Activated CD4-positive, alpha-beta T cell treated with anti-CD3 and anti-CD28 coated beads for 36 hours (primary cell): ENCODE measurements at regions of chr20 and their contacts with region 1.

Region 1: DNA sequence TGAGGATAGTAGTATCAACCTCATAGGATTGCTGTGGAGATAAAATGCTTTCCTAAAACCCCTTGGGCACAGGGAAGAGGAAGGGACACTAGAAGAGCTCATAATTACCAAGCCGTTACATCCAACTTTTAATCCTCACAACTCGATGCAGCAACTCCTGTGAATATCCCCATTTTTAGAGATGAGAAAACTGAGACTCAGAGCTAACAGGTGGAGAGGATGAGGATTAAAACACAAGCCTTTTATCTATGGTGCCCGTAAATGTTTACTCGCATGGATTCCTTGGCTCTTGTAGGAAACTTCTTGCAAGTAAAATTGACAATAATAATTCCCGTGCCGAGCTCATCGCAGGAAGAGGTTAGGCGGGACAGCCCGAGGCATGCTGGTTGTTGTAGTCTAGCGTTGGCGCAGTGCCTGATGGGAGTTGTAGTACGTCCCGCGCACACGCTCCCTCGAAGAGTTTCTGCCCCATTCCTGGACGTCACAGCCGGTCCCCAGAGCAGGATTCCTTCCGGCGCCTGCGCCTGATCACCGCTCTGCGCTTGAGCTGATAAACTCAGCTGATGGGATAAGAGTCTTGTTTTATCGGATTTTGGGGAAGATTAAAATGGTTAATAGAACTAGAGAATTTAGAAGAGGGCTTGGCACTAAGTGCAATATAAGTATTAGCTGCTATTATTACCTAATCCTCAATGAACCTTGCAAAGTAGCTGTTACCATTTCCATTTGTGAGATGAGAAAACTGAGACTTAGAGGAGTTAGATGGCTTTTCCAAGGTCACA is 2.8 kb upstream of the UBE2V1 start:
- DNase-seq: peak; percentile 96
- ATAC-seq: peak; percentile 81
- H3K4me3 Mint-ChIP-seq: peak overlapping the region; percentile 93
- H3K27ac Mint-ChIP-seq: peak overlapping the region; percentile 88
- H3K4me1 Mint-ChIP-seq: peaks cover 39% of the 10 kb centered on the region
- H3K27me3 Mint-ChIP-seq: no peaks in the 10 kb centered on the region

Region 2: GRCh38 chr20:49594143-49594930 is 521.4 kb before region 1 on chr20:
- CTCF ChIA-PET with region 1: no interaction called
- POLR2A ChIA-PET with region 1: no interaction called
- intact Hi-C with region 1: loop called in 1 of 2 experiments (anchors 5 kb)
- DNase-seq: peak; percentile 87
- ATAC-seq: peak; percentile 62
- H3K4me3 Mint-ChIP-seq: peak overlapping the region; percentile 76
- H3K27ac Mint-ChIP-seq: peak overlapping the region; percentile 96
- H3K4me1 Mint-ChIP-seq: peaks cover 77% of the 10 kb centered on the region
- H3K27me3 Mint-ChIP-seq: peaks cover 3% of the 10 kb centered on the region

Region 3: GRCh38 chr20:50070991-50071888 is 44.5 kb before region 1 on chr20:
- CTCF ChIA-PET with region 1: interaction called, 10 read pairs
- POLR2A ChIA-PET with region 1: no interaction called
- intact Hi-C with region 1: no loop called
- DNase-seq: peak; percentile 95
- ATAC-seq: peak; percentile 99
- H3K4me3 Mint-ChIP-seq: peak overlapping the region; percentile 61
- H3K27ac Mint-ChIP-seq: no peak overlapping the region
- H3K4me1 Mint-ChIP-seq: peaks cover 4% of the 10 kb centered on the region
- H3K27me3 Mint-ChIP-seq: no peaks in the 10 kb centered on the region

Region 4: GRCh38 chr20:50153485-50154377 is 37.9 kb after region 1 on chr20 and contains the start of gene PEDS1:
- CTCF ChIA-PET with region 1: interaction called, 20 read pairs
- POLR2A ChIA-PET with region 1: interaction called, 7 read pairs
- intact Hi-C with region 1: loop called (anchors 1 to 2 kb)
- DNase-seq: peak; percentile 91
- ATAC-seq: peak; percentile 98
- H3K4me3 Mint-ChIP-seq: peak within 1 kb of the TSS; percentile 75
- H3K27ac Mint-ChIP-seq: peak within 1 kb of the TSS; percentile 88
- H3K4me1 Mint-ChIP-seq: peaks cover 36% of the 10 kb centered on the region
- H3K27me3 Mint-ChIP-seq: no peaks in the 10 kb centered on the region
- total RNA-seq, gene PEDS1: 13.2 to 16.8 TPM

Region 5: DNA sequence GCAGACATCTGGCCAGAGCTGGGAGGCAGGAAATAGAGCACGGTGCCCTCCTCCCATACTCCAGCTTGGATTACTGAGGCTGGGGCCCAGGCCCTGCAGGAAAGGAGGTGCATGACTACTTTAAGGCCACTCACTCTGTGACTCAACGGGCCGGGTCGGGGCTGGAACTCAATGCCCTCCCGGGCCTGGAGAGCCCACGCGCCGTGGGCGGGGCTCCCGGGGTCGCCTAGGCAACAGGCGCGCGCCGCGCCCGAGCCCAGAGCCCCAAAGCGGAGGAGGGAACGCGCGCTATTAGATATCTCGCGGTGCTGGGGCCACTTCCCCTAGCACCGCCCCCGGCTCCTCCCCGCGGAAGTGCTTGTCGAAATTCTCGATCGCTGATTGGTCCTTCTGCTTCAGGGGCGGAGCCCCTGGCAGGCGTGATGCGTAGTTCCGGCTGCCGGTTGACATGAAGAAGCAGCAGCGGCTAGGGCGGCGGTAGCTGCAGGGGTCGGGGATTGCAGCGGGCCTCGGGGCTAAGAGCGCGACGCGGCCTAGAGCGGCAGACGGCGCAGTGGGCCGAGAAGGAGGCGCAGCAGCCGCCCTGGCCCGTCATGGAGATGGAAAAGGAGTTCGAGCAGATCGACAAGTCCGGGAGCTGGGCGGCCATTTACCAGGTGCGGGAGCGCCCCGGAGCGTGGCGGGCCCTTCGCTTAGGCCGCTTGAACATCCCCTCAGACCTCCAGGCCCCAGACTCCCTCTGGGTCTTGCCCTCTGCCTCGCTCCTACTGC is 394.3 kb after region 1 on chr20 and contains the start of gene PTPN1:
- CTCF ChIA-PET with region 1: no interaction called
- POLR2A ChIA-PET with region 1: no interaction called
- intact Hi-C with region 1: loop called in 1 of 2 experiments (anchors 2 kb)
- DNase-seq: peak; percentile 99
- ATAC-seq: peak; percentile 93
- H3K4me3 Mint-ChIP-seq: peak within 1 kb of the TSS; percentile 99
- H3K27ac Mint-ChIP-seq: peak within 1 kb of the TSS; percentile 92
- H3K4me1 Mint-ChIP-seq: peaks cover 47% of the 10 kb centered on the region
- H3K27me3 Mint-ChIP-seq: no peaks in the 10 kb centered on the region
- total RNA-seq, gene PTPN1: 79.0 to 92.8 TPM